Naive thymus-derived CD4-positive, alpha-beta T cell (primary cell): ENCODE measurements at regions of chr12 and their contacts with region 1.

Region 1: DNA sequence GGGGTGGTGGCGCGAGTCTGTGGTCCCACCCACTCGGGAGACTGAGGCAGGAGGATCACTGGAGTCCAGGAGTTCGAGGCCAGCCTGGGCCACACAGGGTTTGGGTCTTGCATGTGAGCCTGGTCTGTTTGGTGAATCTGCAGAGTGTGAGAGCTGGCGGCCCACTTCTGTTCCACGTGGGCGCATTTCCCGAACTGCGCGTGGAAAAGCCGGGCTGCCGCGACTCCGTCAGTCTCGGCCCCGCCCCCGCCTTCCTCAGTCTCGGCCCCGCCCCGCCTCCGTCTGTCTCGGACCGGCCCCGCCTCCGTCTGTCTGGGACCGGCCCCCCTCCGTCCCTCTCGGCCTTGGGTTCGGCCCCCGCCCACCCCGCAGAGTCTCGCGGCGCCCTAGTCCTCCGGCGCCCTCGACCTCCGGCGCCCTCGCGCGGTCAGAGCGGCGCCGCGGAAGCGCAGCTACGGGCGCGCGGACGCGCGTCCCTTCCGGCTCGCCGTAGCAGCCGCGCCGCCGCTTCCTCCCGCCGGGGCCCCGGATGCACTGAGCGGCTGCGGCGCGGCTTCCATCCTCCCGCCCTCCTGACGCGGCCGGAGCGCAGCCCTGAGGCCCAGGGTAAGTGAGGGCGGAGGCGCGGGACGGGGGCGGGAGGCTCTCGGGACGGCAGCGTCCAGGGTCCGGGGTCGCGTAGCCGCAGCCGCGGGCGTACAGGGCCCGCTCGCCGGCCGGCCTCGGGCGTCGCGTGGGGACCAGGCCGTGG is at the start of gene EP400:
- DNase-seq: peak; percentile 78 to 95 (median 86)
- ATAC-seq: peak; percentile 97
- H3K4me3 ChIP-seq: peak within 1 kb of the TSS; percentile 78
- H3K4me3 Mint-ChIP-seq: peak within 1 kb of the TSS; percentile 80 to 93 (median 91)
- H3K27ac ChIP-seq: peak within 1 kb of the TSS; percentile 84
- H3K27ac Mint-ChIP-seq: peak within 1 kb of the TSS; percentile 88 to 95 (median 91)
- H3K4me1 ChIP-seq: peaks cover 7 to 16% of the 10 kb centered on the region in 2 donors
- H3K4me1 Mint-ChIP-seq: peaks cover 29 to 48% (median 32%) of the 10 kb centered on the region in 7 donors
- H3K27me3 ChIP-seq: no peaks in the 10 kb centered on the region
- H3K27me3 Mint-ChIP-seq: no peaks in the 10 kb centered on the region
- total RNA-seq, gene EP400: 62.2 to 86.8 (median 82.6) TPM

Region 2: GRCh38 chr12:130871286-130872178 is 1078.1 kb before region 1 on chr12 and contains the start of gene RAN:
- CTCF ChIA-PET with region 1: no interaction called
- POLR2A ChIA-PET with region 1: no interaction called
- intact Hi-C with region 1: loop called in 1 of 2 experiments (anchors 5 kb)
- DNase-seq: peak; percentile 86 to 93 (median 90)
- ATAC-seq: peak; percentile 92
- H3K4me3 ChIP-seq: peak within 1 kb of the TSS; percentile 68
- H3K4me3 Mint-ChIP-seq: peak within 1 kb of the TSS; percentile 85 to 98 (median 91)
- H3K27ac ChIP-seq: peak within 1 kb of the TSS; percentile 90
- H3K27ac Mint-ChIP-seq: peak within 1 kb of the TSS; percentile 86 to 98 (median 95)
- H3K4me1 ChIP-seq: peaks cover 46 to 52% of the 10 kb centered on the region in 2 donors
- H3K4me1 Mint-ChIP-seq: peaks cover 29 to 83% (median 61%) of the 10 kb centered on the region in 7 donors
- H3K27me3 ChIP-seq: no peaks in the 10 kb centered on the region
- H3K27me3 Mint-ChIP-seq: no peaks in the 10 kb centered on the region
- total RNA-seq, gene RAN: 255 to 925 (median 269) TPM

Region 3: DNA sequence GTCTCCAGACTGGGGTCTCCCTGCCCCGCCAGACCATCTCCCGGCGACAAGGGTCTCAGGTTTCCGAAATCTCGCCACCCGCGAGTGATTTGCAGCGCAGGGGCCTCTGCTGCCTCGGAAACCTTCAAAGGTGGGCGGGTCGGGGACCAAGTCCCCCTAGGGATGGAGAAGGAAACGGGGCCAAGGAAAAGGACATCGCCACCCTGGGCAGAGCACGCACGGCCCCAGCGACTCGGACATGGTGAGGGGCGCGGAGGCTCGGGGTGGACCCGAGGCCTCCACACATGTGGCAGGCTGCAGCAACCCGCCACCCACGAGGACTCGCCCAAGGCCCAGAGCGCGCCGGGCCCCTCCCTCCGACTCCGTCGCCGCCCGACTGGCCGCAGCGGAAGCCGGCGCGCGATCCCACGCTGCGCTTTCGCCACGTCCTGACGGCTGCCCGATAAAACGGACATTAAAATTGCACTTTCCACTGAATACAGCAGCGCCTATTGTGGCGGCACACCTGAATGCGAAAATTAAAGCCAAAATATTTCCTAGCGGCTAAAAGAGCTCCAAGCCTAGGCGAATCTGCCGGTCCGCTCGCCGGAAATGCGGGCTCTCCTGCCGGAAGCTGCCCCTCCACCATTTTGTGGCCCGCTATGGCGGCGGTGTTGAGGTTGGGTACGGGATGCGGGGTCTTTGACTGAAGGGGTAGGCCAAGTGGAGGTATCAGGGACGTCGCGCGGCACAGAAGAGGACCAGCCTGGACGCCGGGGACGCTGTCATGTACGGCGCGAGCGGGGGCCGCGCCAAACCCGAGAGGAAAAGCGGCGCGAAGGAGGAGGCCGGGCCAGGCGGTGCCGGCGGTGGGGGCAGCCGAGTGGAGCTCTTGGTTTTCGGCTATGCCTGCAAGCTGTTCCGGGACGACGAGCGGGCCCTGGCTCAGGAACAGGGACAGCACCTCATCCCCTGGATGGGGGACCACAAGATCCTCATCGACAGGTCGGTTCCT is 238.8 kb before region 1 on chr12 and contains the start of gene SFSWAP:
- CTCF ChIA-PET with region 1: no interaction called
- POLR2A ChIA-PET with region 1: no interaction called
- intact Hi-C with region 1: loop called (anchors 1 to 2 kb)
- DNase-seq: peak; percentile 63 to 81 (median 79)
- ATAC-seq: peak; percentile 92
- H3K4me3 ChIP-seq: peak within 1 kb of the TSS; percentile 84
- H3K4me3 Mint-ChIP-seq: peak within 1 kb of the TSS; percentile 93 to 99 (median 96)
- H3K27ac ChIP-seq: peak within 1 kb of the TSS; percentile 87
- H3K27ac Mint-ChIP-seq: peak within 1 kb of the TSS; percentile 90 to 99 (median 97)
- H3K4me1 ChIP-seq: peaks cover 18 to 19% of the 10 kb centered on the region in 2 donors
- H3K4me1 Mint-ChIP-seq: peaks cover 15 to 40% (median 28%) of the 10 kb centered on the region in 7 donors
- H3K27me3 ChIP-seq: no peaks in the 10 kb centered on the region
- H3K27me3 Mint-ChIP-seq: no peaks in the 10 kb centered on the region
- total RNA-seq, gene SFSWAP: 65.6 to 120 (median 98.4) TPM

Region 4: GRCh38 chr12:131830335-131830913 is 119.2 kb before region 1 on chr12:
- CTCF ChIA-PET with region 1: no interaction called
- POLR2A ChIA-PET with region 1: no interaction called
- intact Hi-C with region 1: loop called in 1 of 2 experiments (anchors 5 kb)
- DNase-seq: peak in 4 of 9 donors; percentile 15 to 49 (median 36)
- ATAC-seq: peak; percentile 69
- H3K4me3 ChIP-seq: peak overlapping the region; percentile 13
- H3K4me3 Mint-ChIP-seq: peak overlapping the region; percentile 61 to 78 (median 72)
- H3K27ac ChIP-seq: no peak overlapping the region
- H3K27ac Mint-ChIP-seq: no peak overlapping the region
- H3K4me1 ChIP-seq: peaks cover 0 to 19% of the 10 kb centered on the region in 2 donors
- H3K4me1 Mint-ChIP-seq: peaks cover 4 to 14% (median 10%) of the 10 kb centered on the region in 7 donors
- H3K27me3 ChIP-seq: peaks cover 0 to 6% of the 10 kb centered on the region in 2 donors
- H3K27me3 Mint-ChIP-seq: peaks cover 30 to 52% (median 35%) of the 10 kb centered on the region in 5 donors

Region 5: DNA sequence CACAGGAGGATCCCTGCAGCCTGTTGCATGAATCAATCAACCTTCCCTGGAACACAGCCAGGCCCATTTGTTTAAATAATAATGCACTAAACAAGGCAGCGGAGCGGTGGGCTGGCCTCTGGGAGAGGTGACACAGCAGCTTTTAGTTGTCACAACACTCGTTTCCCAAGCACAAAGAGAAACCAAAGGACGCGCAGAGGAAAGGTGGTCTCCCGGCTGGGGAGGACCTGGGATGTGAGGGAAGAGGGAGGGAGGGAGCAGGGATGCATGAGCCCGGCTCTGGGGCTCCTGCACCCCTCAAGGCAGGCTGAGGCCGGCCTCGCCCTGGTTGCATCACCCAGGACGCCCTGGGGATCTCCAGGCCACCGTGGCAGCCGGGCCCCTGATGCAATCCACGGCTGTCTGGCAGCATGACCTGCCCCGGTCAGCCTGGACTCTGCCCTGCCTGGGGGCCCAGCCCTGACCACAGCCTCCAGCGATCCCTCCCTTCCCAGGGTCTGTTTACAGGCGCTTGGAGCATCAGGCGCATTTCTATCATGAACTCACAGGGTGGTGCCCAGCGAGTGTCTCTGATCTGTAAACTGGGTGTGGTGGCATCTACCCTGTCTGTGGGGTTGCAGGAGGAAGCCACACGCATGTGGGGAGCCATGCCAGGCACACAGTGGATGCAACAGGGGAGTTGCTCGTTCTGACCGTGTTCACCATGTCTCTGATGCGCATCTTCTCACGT is 88.9 kb before region 1 on chr12:
- CTCF ChIA-PET with region 1: no interaction called
- POLR2A ChIA-PET with region 1: no interaction called
- intact Hi-C with region 1: no loop called
- DNase-seq: peak in 1 of 9 donors; percentile 42
- ATAC-seq: peak; percentile 88
- H3K4me3 ChIP-seq: no peak overlapping the region
- H3K4me3 Mint-ChIP-seq: no peak overlapping the region
- H3K27ac ChIP-seq: no peak overlapping the region
- H3K27ac Mint-ChIP-seq: peak overlapping the region in 1 of 9 donors; percentile 29
- H3K4me1 ChIP-seq: no peaks in the 10 kb centered on the region
- H3K4me1 Mint-ChIP-seq: peaks cover 0 to 13% (median 4%) of the 10 kb centered on the region in 7 donors
- H3K27me3 ChIP-seq: no peaks in the 10 kb centered on the region
- H3K27me3 Mint-ChIP-seq: peaks cover 0 to 8% (median 0%) of the 10 kb centered on the region in 5 donors

Region 6: GRCh38 chr12:131894313-131894860 is 55.2 kb before region 1 on chr12 and contains the start of gene ULK1:
- CTCF ChIA-PET with region 1: no interaction called
- POLR2A ChIA-PET with region 1: no interaction called
- intact Hi-C with region 1: loop called (anchors 1 kb)
- DNase-seq: peak; percentile 85 to 97 (median 92)
- ATAC-seq: peak; percentile 88
- H3K4me3 ChIP-seq: peak within 1 kb of the TSS; percentile 71
- H3K4me3 Mint-ChIP-seq: peak within 1 kb of the TSS; percentile 86 to 94 (median 92)
- H3K27ac ChIP-seq: peak within 1 kb of the TSS; percentile 83
- H3K27ac Mint-ChIP-seq: peak within 1 kb of the TSS; percentile 68 to 94 (median 85)
- H3K4me1 ChIP-seq: peaks cover 0 to 12% of the 10 kb centered on the region in 2 donors
- H3K4me1 Mint-ChIP-seq: peaks cover 10 to 29% (median 22%) of the 10 kb centered on the region in 7 donors
- H3K27me3 ChIP-seq: no peaks in the 10 kb centered on the region
- H3K27me3 Mint-ChIP-seq: no peaks in the 10 kb centered on the region
- total RNA-seq, gene ULK1: 33.9 to 109 (median 43.8) TPM

Region 7: GRCh38 chr12:131959641-131960589 is 10.3 kb after region 1 on chr12:
- CTCF ChIA-PET with region 1: no interaction called
- POLR2A ChIA-PET with region 1: interaction called, 5 read pairs
- intact Hi-C with region 1: loop called in 1 of 2 experiments (anchors 1 kb)
- DNase-seq: no peak
- ATAC-seq: no peak
- H3K4me3 ChIP-seq: no peak overlapping the region
- H3K4me3 Mint-ChIP-seq: peak overlapping the region in 2 of 10 donors; percentile 11 to 19
- H3K27ac ChIP-seq: peak overlapping the region; percentile 7
- H3K27ac Mint-ChIP-seq: peak overlapping the region in 8 of 9 donors; percentile 40 to 87 (median 68)
- H3K4me1 ChIP-seq: peaks cover 11 to 33% of the 10 kb centered on the region in 2 donors
- H3K4me1 Mint-ChIP-seq: peaks cover 52 to 80% (median 67%) of the 10 kb centered on the region in 7 donors
- H3K27me3 ChIP-seq: no peaks in the 10 kb centered on the region
- H3K27me3 Mint-ChIP-seq: no peaks in the 10 kb centered on the region

Region 8: DNA sequence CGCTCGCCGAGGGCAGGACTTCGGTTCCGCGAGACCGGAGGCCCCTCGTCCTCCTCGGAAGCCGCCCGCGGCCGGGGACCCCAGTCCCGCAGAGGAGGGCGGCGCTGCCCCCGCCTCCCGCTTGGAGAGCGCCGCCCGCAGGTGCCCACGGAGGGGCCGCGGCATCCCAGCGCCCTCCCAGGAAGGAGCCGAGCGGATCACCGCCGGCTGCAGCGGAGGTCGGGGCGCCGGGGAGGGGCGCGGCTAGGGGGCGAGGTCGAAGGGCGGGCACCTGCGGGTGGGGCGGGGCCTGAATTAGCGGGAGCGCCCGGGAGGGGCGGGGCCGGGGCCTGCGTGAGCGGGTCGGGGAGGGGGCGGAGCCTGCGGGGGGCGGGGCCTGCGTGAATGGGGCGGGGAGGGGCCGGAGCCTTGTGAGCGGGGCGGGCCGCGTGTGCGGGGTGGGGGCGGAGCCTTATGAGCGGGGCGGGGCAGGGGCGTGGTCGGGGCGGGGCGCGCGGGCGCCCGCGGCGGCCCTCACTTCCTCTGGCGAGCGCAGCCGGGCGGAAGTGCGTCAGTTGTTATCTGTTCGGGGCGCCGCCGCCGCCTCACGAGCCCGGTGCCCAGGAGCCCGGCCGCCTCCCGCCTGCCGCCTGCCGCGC is 540.1 kb after region 1 on chr12 and contains the start of gene FBRSL1:
- CTCF ChIA-PET with region 1: no interaction called
- POLR2A ChIA-PET with region 1: no interaction called
- intact Hi-C with region 1: loop called in 1 of 2 experiments (anchors 10 kb)
- DNase-seq: peak; percentile 83 to 93 (median 91)
- ATAC-seq: peak; percentile 88
- H3K4me3 ChIP-seq: peak within 1 kb of the TSS; percentile 83
- H3K4me3 Mint-ChIP-seq: peak within 1 kb of the TSS; percentile 88 to 95 (median 92)
- H3K27ac ChIP-seq: peak within 1 kb of the TSS; percentile 96
- H3K27ac Mint-ChIP-seq: peak within 1 kb of the TSS; percentile 89 to 97 (median 94)
- H3K4me1 ChIP-seq: peaks cover 46 to 52% of the 10 kb centered on the region in 2 donors
- H3K4me1 Mint-ChIP-seq: peaks cover 51 to 76% (median 63%) of the 10 kb centered on the region in 7 donors
- H3K27me3 ChIP-seq: no peaks in the 10 kb centered on the region
- H3K27me3 Mint-ChIP-seq: no peaks in the 10 kb centered on the region
- total RNA-seq, gene FBRSL1: 56.3 to 105 (median 93.0) TPM